ENCODE measurements at regions of chr1 and their contacts with region 1.

Region 1: GRCh38 chr1:8423650-8424538 is 106.0 kb downstream of the SLC45A1 start:
- DNase-seq: peak; percentile 74
- H3K4me3 Mint-ChIP-seq: peak overlapping the region; percentile 85
- H3K27ac Mint-ChIP-seq: peak overlapping the region; percentile 96
- H3K4me1 Mint-ChIP-seq: peaks cover 41% of the 10 kb centered on the region
- H3K27me3 Mint-ChIP-seq: no peaks in the 10 kb centered on the region

Region 2: GRCh38 chr1:8358904-8359603 is 64.8 kb before region 1 on chr1:
- CTCF ChIA-PET with region 1: no interaction called
- POLR2A ChIA-PET with region 1: no interaction called
- intact Hi-C with region 1: no loop called
- DNase-seq: no peak
- H3K4me3 Mint-ChIP-seq: no peak overlapping the region
- H3K27ac Mint-ChIP-seq: no peak overlapping the region
- H3K4me1 Mint-ChIP-seq: no peaks in the 10 kb centered on the region
- H3K27me3 Mint-ChIP-seq: no peaks in the 10 kb centered on the region

Region 3: GRCh38 chr1:8370046-8370881 is 53.6 kb before region 1 on chr1:
- CTCF ChIA-PET with region 1: no interaction called
- POLR2A ChIA-PET with region 1: no interaction called
- intact Hi-C with region 1: no loop called
- DNase-seq: no peak
- H3K4me3 Mint-ChIP-seq: no peak overlapping the region
- H3K27ac Mint-ChIP-seq: peak overlapping the region; percentile 46
- H3K4me1 Mint-ChIP-seq: peaks cover 55% of the 10 kb centered on the region
- H3K27me3 Mint-ChIP-seq: no peaks in the 10 kb centered on the region

Region 4: GRCh38 chr1:8382051-8382505 is 41.8 kb before region 1 on chr1:
- CTCF ChIA-PET with region 1: no interaction called
- POLR2A ChIA-PET with region 1: no interaction called
- intact Hi-C with region 1: loop called (anchors 5 kb)
- DNase-seq: no peak
- H3K4me3 Mint-ChIP-seq: no peak overlapping the region
- H3K27ac Mint-ChIP-seq: peak overlapping the region; percentile 72
- H3K4me1 Mint-ChIP-seq: peaks cover 83% of the 10 kb centered on the region
- H3K27me3 Mint-ChIP-seq: no peaks in the 10 kb centered on the region

Region 5: GRCh38 chr1:8463144-8463927 is 39.4 kb after region 1 on chr1:
- CTCF ChIA-PET with region 1: no interaction called
- POLR2A ChIA-PET with region 1: no interaction called
- intact Hi-C with region 1: no loop called
- DNase-seq: peak; percentile 19
- H3K4me3 Mint-ChIP-seq: no peak overlapping the region
- H3K27ac Mint-ChIP-seq: no peak overlapping the region
- H3K4me1 Mint-ChIP-seq: peaks cover 24% of the 10 kb centered on the region
- H3K27me3 Mint-ChIP-seq: no peaks in the 10 kb centered on the region

Region 6: GRCh38 chr1:8477166-8477982 is 53.5 kb after region 1 on chr1:
- CTCF ChIA-PET with region 1: no interaction called
- POLR2A ChIA-PET with region 1: interaction called, 5 read pairs
- intact Hi-C with region 1: loop called (anchors 2 kb)
- DNase-seq: peak; percentile 52
- H3K4me3 Mint-ChIP-seq: peak overlapping the region; percentile 26
- H3K27ac Mint-ChIP-seq: peak overlapping the region; percentile 40
- H3K4me1 Mint-ChIP-seq: peaks cover 50% of the 10 kb centered on the region
- H3K27me3 Mint-ChIP-seq: no peaks in the 10 kb centered on the region

Region 7: DNA sequence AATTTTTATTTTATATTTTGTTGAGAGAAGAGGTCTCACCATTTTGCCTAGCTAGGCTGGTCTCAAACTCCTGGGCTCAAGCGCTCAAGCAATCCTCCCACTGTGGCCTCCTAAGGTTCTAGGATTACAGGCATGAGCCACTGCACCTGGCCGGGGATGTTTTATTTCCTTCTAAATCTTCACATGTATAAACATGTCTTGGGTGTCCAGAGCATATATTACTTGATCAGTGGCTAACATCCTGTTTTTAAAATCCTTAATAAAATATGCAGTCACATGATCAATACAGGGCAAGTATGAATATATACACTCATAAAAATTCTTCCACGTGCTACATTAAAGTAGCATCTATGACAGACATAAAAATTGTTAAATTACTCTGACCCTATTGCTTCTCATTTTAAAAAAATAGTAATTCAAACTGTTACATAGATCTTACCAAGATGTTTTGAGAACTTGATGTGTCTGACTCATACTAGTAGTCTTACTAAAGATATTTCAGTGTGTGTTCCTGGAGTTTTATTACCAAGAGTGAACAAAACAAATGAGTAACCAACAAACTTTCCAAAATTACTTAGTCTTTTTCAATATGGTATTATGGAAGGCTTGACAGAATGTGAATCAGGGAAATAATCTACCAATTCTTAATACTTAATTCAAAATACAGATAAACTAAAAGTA is 116.5 kb after region 1 on chr1:
- CTCF ChIA-PET with region 1: no interaction called
- POLR2A ChIA-PET with region 1: interaction called, 3 read pairs
- intact Hi-C with region 1: loop called (anchors 5 kb)
- DNase-seq: no peak
- H3K4me3 Mint-ChIP-seq: no peak overlapping the region
- H3K27ac Mint-ChIP-seq: peak overlapping the region; percentile 69
- H3K4me1 Mint-ChIP-seq: peaks cover 40% of the 10 kb centered on the region
- H3K27me3 Mint-ChIP-seq: no peaks in the 10 kb centered on the region

Region 8: DNA sequence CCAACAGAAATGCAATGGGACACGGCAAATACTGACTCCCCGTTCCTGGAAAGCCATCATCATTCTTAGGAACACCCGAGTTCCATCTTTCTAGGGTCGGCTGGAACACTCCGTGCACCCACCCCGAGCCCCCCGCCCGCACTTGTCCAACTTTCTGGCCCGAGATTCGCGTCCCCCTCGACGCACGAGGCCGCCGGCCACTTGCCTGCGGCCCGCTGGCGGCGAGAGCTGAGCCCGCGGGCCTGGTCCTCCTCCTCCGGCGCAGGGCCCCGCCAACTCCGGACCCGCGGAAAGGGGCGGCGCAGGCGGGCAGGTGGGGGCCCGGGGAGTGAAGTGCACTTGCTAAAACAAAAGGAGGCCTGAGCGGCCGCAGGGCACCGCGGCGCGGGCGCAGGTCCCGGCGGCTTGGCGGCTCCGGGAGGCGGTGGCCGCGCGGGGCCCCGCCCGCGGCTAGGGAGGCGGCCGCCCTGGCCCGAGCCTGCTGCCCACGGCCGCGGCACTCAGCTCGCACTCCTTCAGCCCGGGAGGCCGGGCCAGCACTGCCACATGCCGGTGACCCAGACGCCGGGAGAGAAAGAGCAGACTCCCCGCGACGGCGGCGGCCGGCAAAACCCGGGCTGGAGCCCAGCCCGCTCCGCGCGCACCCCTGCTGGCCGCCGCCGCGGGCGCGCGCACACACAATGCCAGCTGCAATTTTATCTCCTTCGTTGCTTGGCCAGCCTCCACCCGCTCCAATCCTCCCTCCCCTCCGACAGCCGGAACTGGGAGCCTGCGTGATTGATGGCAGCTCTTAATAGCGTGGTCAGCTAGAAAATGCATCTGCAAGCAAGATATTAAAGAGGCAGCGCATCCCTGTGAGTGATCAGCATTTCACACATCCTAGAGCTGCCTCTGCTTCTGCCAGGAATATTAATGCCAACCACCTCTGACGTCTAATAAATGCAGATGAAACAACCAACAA is 279.2 kb after region 1 on chr1:
- CTCF ChIA-PET with region 1: interaction called, 4 read pairs
- POLR2A ChIA-PET with region 1: no interaction called
- intact Hi-C with region 1: loop called (anchors 5 kb)
- DNase-seq: peak; percentile 77
- H3K4me3 Mint-ChIP-seq: peak overlapping the region; percentile 78
- H3K27ac Mint-ChIP-seq: peak overlapping the region; percentile 34
- H3K4me1 Mint-ChIP-seq: peaks cover 27% of the 10 kb centered on the region
- H3K27me3 Mint-ChIP-seq: peaks cover 30% of the 10 kb centered on the region

Measured in activated CD4-positive, alpha-beta memory T cell treated with anti-CD3 and anti-CD28 coated beads for 36 hours (primary cell).